Adrenal gland (tissue), 19 donors: ENCODE measurements at regions of chr1 and their contacts with region 1.

Region 1: GRCh38 chr1:228174482-228175375 is 9.1 kb downstream of the IBA57 start:
- DNase-seq: peak in 3 of 7 donors; percentile 13 to 51 (median 15)
- H3K4me3 ChIP-seq: no peak overlapping the region
- H3K27ac ChIP-seq: no peak overlapping the region
- H3K4me1 ChIP-seq: no peaks in the 10 kb centered on the region
- H3K27me3 ChIP-seq: no peaks in the 10 kb centered on the region
- CTCF ChIP-seq: no peak
- POLR2A ChIP-seq: no peak

Region 2: DNA sequence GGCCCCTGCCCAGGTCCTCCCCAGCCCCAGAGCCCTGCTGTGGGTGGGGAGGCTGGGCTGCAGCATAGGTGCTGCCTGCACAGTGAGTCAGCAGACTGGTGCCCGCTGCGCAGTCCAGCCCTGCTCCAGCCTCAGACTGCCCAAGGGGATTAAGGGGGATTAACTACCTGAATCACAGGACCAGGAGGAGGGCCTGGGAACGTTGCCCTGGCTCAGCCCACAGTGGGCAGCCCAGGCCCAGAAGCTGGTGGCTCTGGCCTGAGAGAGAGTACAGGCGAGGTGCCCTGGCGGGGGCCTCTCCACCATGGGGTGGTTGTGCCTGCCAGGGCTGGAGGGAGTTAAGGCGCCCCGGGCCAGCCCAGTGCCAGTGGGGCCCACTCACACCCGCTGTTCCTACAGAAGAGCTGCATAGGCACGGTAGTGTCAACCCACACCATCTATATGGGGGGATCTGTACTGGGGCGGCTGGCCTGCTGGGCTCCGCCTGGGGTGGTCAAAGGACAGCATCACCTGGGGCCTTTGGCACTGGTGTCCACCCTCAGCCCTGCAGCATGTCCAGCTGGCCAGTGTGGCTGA is 35.4 kb after region 1 on chr1:
- intact Hi-C with region 1: loop called (anchors 2 to 5 kb)
- DNase-seq: peak in 1 of 7 donors; percentile 13
- H3K4me3 ChIP-seq: no peak overlapping the region
- H3K27ac ChIP-seq: no peak overlapping the region
- H3K4me1 ChIP-seq: peaks cover 5% of the 10 kb centered on the region in 2 donors
- H3K27me3 ChIP-seq: peaks cover 11% of the 10 kb centered on the region
- CTCF ChIP-seq: no peak
- POLR2A ChIP-seq: no peak

Region 3: DNA sequence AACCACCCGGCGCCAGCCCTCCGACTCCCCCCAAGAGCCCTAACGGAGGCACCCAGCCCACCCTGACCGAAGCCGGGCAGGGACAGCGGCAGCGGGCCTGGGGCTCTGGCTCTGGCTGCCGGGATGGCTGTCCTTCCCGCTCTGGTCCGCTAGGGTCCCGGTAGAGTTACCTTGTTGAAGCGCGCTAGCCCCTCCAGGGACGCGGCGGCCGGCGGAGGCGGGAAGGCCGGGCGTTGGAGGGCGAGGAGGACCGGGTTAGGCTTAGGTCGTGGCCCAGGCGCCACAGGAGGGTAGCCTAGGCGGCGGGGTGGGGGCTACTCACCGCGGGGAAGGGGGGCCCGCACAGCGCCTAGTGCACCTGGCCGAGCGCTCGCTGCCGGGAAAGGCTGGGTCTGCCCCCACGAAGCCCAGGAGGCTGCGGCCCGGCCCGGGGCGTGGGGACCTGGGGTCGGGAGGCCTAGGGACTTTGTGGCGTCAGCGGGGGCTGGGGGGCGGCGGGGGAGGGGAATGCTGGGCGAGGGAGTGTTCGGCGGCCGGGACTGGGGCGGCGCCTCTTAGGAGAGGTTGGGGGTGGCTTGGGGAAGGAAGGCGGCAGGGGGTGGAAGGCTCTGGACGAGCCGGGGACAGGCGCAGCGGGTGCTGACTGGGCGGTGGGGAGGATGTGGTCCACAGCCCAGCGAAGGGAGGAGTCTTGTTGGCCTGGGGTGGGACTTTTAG is 241.6 kb after region 1 on chr1 and contains the start of gene TRIM17:
- intact Hi-C with region 1: no loop called
- DNase-seq: no peak
- H3K4me3 ChIP-seq: peak within 1 kb of the TSS in 2 of 4 donors; percentile 17 to 45
- H3K27ac ChIP-seq: no peak within 1 kb of the TSS
- H3K4me1 ChIP-seq: peaks cover 8 to 14% of the 10 kb centered on the region in 2 donors
- H3K27me3 ChIP-seq: peaks cover 14% of the 10 kb centered on the region
- CTCF ChIP-seq: peak in 2 of 6 experiments; percentile 21 to 37
- POLR2A ChIP-seq: no peak
- total RNA-seq, gene TRIM17: 0.17 to 7.4 (median 0.96) TPM in 7 of 9 donors, not detected in the others